Activated B cell treated with CpG ODN at 0.5 μM for 24 hours (primary cell): ENCODE measurements at regions of chr3 and their contacts with region 1.

Region 1: GRCh38 chr3:128650096-128651050 is at the start of gene RPN1:
- DNase-seq: peak; percentile 90
- ATAC-seq: peak; percentile 97
- H3K4me3 Mint-ChIP-seq: peak within 1 kb of the TSS; percentile 89
- H3K27ac Mint-ChIP-seq: peak within 1 kb of the TSS; percentile 86
- H3K4me1 Mint-ChIP-seq: peaks cover 41% of the 10 kb centered on the region
- H3K27me3 Mint-ChIP-seq: no peaks in the 10 kb centered on the region
- CTCF ChIP-seq: no peak
- total RNA-seq, gene RPN1: 93.4 and 95.2 TPM in 2 replicates

Region 2: GRCh38 chr3:128674161-128674784 is 23.9 kb after region 1 on chr3:
- CTCF ChIA-PET with region 1: no interaction called
- POLR2A ChIA-PET with region 1: interaction called, 12 read pairs
- intact Hi-C with region 1: no loop called
- DNase-seq: no peak
- ATAC-seq: no peak
- H3K4me3 Mint-ChIP-seq: no peak overlapping the region
- H3K27ac Mint-ChIP-seq: peak overlapping the region; percentile 61
- H3K4me1 Mint-ChIP-seq: peaks cover 22% of the 10 kb centered on the region
- H3K27me3 Mint-ChIP-seq: no peaks in the 10 kb centered on the region
- CTCF ChIP-seq: no peak